ENCODE measurements at regions of chr1 and their contacts with region 1.

Region 1: GRCh38 chr1:152001391-152002249 is 8.0 kb upstream of the S100A10 start:
- DNase-seq: peak; percentile 78 to 87 (median 79)
- H3K4me3 ChIP-seq: no peak overlapping the region
- H3K27ac ChIP-seq: no peak overlapping the region
- H3K4me1 ChIP-seq: no peaks in the 10 kb centered on the region
- H3K27me3 ChIP-seq: peaks cover 0 to 17% (median 5%) of the 10 kb centered on the region in 5 experiments

Region 2: DNA sequence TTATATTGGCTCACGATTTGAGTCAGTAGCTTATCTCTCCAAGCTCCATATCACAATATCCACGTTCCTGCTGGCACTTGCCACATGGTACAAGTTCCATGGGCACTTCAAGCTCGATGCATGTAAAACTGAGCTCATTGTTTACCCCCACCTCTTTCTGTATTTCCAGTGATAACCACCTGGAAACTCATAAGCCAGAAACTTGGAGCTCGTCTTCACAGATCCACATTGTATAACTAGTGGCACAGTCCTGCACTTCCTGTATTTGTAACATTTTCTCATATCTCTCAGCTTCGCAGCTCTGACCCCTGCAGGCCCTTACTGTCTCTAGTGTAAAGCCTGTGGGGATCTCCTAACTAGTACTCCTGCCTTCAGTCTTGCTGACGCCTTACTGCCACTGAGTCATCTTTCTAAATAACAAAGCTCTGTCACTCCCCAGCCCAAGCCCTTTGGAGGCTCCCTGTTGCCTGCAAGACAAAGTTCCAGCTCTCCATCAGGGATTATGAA is 155.5 kb before region 1 on chr1:
- CTCF ChIA-PET with region 1: no interaction called
- POLR2A ChIA-PET with region 1: no interaction called
- DNase-seq: peak in 2 of 3 donors; percentile 48 to 62
- H3K4me3 ChIP-seq: no peak overlapping the region
- H3K27ac ChIP-seq: no peak overlapping the region
- H3K4me1 ChIP-seq: peaks cover 0 to 47% (median 22%) of the 10 kb centered on the region in 4 experiments
- H3K27me3 ChIP-seq: no peaks in the 10 kb centered on the region

Region 3: GRCh38 chr1:151898513-151898991 is 103.1 kb before region 1 on chr1:
- CTCF ChIA-PET with region 1: interaction called, 36 read pairs
- POLR2A ChIA-PET with region 1: no interaction called
- DNase-seq: peak; percentile 20 to 52 (median 33)
- H3K4me3 ChIP-seq: peak overlapping the region in 4 of 7 experiments; percentile 25 to 60 (median 40)
- H3K27ac ChIP-seq: no peak overlapping the region
- H3K4me1 ChIP-seq: peaks cover 0 to 22% (median 12%) of the 10 kb centered on the region in 4 experiments
- H3K27me3 ChIP-seq: no peaks in the 10 kb centered on the region

Region 4: DNA sequence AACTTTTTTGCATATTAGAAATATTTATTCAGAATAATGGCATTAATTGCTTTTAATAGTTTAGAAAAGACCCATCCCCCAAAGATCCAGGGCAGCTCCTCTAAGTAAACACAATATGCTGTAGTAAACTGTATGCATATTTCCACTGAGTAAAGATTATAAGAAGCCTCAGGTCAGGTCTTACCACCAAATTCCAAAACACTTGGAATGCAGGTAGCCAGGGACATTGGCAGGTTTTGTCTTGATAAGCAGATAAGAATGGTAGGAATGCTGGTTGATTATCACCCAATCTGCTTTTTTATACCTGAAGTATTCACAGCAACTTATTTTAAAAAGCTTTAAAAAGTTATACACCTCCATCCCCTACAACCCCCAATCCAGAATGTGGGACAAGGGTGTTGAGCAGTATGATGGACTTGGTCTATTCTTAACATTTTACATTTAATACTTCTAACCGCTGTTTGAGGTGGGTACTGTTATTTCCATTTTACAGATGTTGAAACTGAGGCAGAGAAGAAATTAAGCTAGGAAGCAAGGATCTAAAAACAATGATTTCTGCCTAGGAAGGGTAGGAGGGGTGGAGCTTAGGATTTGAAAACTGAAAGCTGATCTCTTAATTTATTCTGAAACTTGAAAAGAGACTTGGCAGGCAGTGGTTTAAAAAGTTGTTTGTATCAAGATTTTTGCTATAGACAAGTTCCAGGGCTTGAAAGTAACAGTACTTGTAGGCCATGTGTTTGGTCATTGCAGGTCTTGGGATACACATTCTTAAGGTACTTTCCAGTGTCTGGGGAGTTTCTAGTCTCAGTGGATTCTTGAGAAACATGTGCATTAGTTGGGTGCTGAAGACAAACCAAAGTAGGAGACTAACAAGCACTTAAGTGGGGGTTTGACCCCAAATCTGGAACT is 76.7 kb before region 1 on chr1:
- CTCF ChIA-PET with region 1: interaction called, 20 read pairs
- POLR2A ChIA-PET with region 1: no interaction called
- DNase-seq: peak in 1 of 3 donors; percentile 17
- H3K4me3 ChIP-seq: no peak overlapping the region
- H3K27ac ChIP-seq: no peak overlapping the region
- H3K4me1 ChIP-seq: peaks cover 3 to 17% (median 14%) of the 10 kb centered on the region in 4 experiments
- H3K27me3 ChIP-seq: no peaks in the 10 kb centered on the region

Region 5: DNA sequence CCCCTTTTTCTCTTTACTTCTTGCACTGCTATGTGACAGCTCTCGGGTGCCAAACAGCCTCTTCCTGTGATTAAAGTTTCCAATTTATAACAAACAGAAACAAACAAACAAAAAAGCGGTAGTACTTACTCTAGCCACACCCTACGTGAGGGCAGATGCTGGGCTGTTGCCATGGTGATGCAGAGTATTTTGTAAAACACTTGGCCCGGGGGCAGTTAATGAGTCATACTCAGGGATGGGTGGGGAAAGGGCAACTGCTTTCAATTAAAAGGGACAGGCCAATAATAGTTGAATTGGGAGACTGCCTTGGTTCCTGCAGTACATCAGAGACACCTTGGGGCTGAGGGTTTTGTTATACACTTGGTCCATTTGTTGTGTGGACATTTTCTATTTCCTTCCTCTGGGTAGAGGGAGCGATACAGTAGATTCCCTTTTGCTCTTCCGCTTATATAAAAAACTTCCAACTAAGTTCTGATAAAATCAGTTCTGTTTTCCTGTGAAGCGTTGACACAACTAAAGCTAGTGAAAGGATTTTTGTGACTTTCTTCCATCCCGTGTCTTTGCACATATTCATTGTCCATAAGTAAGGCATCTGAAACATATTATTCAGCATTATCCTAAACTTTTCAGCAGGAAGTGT is 55.8 kb before region 1 on chr1:
- CTCF ChIA-PET with region 1: interaction called, 18 read pairs
- POLR2A ChIA-PET with region 1: no interaction called
- DNase-seq: peak; percentile 99 to 100 (median 99)
- H3K4me3 ChIP-seq: peak overlapping the region in 1 of 7 experiments; percentile 54
- H3K27ac ChIP-seq: peak overlapping the region; percentile 80 to 93
- H3K4me1 ChIP-seq: peaks cover 2 to 50% (median 26%) of the 10 kb centered on the region in 4 experiments
- H3K27me3 ChIP-seq: no peaks in the 10 kb centered on the region

Region 6: GRCh38 chr1:151976858-151977257 is 24.8 kb before region 1 on chr1:
- CTCF ChIA-PET with region 1: interaction called, 104 read pairs
- POLR2A ChIA-PET with region 1: no interaction called
- DNase-seq: no peak
- H3K4me3 ChIP-seq: no peak overlapping the region
- H3K27ac ChIP-seq: no peak overlapping the region
- H3K4me1 ChIP-seq: peaks cover 0 to 12% (median 7%) of the 10 kb centered on the region in 4 experiments
- H3K27me3 ChIP-seq: peaks cover 0 to 15% (median 2%) of the 10 kb centered on the region in 5 experiments

Region 7: GRCh38 chr1:152013664-152014237 is 12.1 kb after region 1 on chr1:
- CTCF ChIA-PET with region 1: interaction called, 95 read pairs
- POLR2A ChIA-PET with region 1: no interaction called
- DNase-seq: peak; percentile 52 to 75 (median 69)
- H3K4me3 ChIP-seq: no peak overlapping the region
- H3K27ac ChIP-seq: no peak overlapping the region
- H3K4me1 ChIP-seq: no peaks in the 10 kb centered on the region
- H3K27me3 ChIP-seq: no peaks in the 10 kb centered on the region